ENCODE measurements at regions of chr1 and their contacts with region 1.

Region 1: DNA sequence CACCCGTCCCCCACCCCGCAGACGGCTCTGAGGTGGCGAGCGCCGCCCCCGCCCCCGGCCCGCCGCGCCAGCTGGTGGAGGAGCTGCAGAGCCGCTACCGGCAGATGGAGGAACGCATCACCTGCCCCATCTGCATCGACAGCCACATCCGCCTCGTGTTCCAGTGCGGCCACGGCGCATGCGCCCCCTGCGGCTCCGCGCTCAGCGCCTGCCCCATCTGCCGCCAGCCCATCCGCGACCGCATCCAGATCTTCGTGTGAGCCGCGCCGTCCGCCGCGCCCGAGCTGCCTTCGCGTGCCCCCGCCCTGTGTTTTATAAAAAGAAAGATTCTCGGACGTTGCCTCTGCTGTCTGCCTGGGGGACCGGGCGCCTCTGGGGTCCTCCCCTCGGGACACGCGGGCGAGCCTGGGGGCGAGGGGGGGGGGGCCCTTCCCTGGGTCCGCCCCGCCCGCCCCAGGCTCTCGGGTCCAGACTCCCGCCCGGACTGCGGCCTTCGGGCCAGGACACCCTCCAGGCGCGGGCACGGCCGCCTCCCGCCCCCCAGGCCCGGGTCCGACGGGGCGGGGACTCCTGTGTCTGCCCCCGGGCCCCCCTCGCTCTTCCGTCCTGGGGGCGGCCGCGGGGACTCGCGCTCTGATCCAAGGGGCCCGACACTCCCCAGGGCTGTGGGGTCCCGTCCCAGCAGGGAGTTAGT is 1.6 kb upstream of the MMP23B start:
- DNase-seq: peak; percentile 92 to 98 (median 97)
- H3K4me3 ChIP-seq: no peak overlapping the region
- H3K4me3 Mint-ChIP-seq: peak overlapping the region; percentile 86 to 96 (median 92)
- H3K27ac ChIP-seq: peak overlapping the region; percentile 51
- H3K27ac Mint-ChIP-seq: peak overlapping the region; percentile 91 to 99 (median 96)
- H3K4me1 ChIP-seq: peaks cover 5% of the 10 kb centered on the region
- H3K4me1 Mint-ChIP-seq: peaks cover 6 to 17% (median 8%) of the 10 kb centered on the region in 3 donors
- H3K27me3 ChIP-seq: no peaks in the 10 kb centered on the region
- H3K27me3 Mint-ChIP-seq: peaks cover 0 to 2% of the 10 kb centered on the region in 2 donors

Region 2: GRCh38 chr1:1602968-1603506 is 27.4 kb before region 1 on chr1:
- CTCF ChIA-PET with region 1: no interaction called
- POLR2A ChIA-PET with region 1: no interaction called
- DNase-seq: no peak
- H3K4me3 ChIP-seq: no peak overlapping the region
- H3K4me3 Mint-ChIP-seq: peak overlapping the region in 1 of 7 donors; percentile 57
- H3K27ac ChIP-seq: no peak overlapping the region
- H3K27ac Mint-ChIP-seq: peak overlapping the region in 2 of 8 donors; percentile 31 to 54
- H3K4me1 ChIP-seq: peaks cover 17% of the 10 kb centered on the region
- H3K4me1 Mint-ChIP-seq: peaks cover 3 to 18% (median 8%) of the 10 kb centered on the region in 3 donors
- H3K27me3 ChIP-seq: no peaks in the 10 kb centered on the region
- H3K27me3 Mint-ChIP-seq: peaks cover 0 to 5% of the 10 kb centered on the region in 2 donors

Region 3: GRCh38 chr1:1615256-1616044 is 15.0 kb before region 1 on chr1 and contains the start of gene MIB2:
- CTCF ChIA-PET with region 1: interaction called, 29 read pairs
- POLR2A ChIA-PET with region 1: interaction called, 101 read pairs
- DNase-seq: peak; percentile 98 to 99 (median 99)
- H3K4me3 ChIP-seq: peak within 1 kb of the TSS; percentile 95
- H3K4me3 Mint-ChIP-seq: peak within 1 kb of the TSS; percentile 91 to 98 (median 93)
- H3K27ac ChIP-seq: peak within 1 kb of the TSS; percentile 99
- H3K27ac Mint-ChIP-seq: peak within 1 kb of the TSS; percentile 97 to 100 (median 98)
- H3K4me1 ChIP-seq: peaks cover 30% of the 10 kb centered on the region
- H3K4me1 Mint-ChIP-seq: peaks cover 21 to 37% (median 22%) of the 10 kb centered on the region in 3 donors
- H3K27me3 ChIP-seq: no peaks in the 10 kb centered on the region
- H3K27me3 Mint-ChIP-seq: no peaks in the 10 kb centered on the region
- total RNA-seq, gene MIB2: 45.7 to 46.6 TPM

Region 4: DNA sequence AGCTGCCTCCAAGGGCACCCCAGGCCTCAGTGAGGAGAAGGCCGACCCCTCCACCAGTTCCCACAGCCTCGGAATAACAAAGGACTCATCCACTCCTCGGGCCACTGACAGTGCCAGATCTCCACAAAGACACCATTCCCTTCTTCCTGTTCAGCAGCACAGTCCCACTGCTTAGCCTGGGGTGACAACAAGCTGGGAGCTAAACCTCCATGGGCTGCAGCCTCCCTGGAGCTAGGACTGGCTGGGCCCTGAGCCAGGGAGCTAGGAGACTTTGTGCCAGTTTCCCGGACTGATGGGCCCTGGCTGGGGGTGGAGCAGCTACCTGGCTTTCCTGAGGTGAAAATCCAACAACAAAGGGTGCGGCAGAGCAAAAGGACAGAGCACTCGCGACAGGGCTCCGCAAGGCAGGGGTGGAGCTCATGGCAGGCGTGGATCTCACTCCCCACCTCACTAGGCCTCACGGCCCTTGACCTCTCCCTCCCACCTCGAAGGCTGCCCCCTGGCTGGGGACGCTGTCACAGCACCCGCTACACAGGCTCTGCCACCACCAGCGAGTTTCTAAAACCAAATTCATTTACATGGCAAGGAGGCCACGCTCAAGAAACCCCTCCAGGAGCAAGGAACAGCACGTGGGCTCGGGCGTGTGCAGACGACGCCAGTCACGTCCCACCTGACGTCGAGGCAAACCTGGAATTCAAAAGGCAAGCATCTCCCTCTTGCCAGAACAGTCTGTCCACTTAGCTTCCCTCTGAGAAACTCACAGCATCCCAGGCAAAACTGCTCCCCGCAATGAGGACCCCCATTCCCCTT is 48.4 kb after region 1 on chr1:
- CTCF ChIA-PET with region 1: interaction called, 8 read pairs
- POLR2A ChIA-PET with region 1: interaction called, 19 read pairs
- DNase-seq: peak in 4 of 5 donors; percentile 21 to 51 (median 38)
- H3K4me3 ChIP-seq: peak overlapping the region; percentile 49
- H3K4me3 Mint-ChIP-seq: peak overlapping the region; percentile 78 to 91 (median 86)
- H3K27ac ChIP-seq: no peak overlapping the region
- H3K27ac Mint-ChIP-seq: peak overlapping the region; percentile 90 to 99 (median 96)
- H3K4me1 ChIP-seq: peaks cover 15% of the 10 kb centered on the region
- H3K4me1 Mint-ChIP-seq: peaks cover 31 to 42% (median 37%) of the 10 kb centered on the region in 3 donors
- H3K27me3 ChIP-seq: no peaks in the 10 kb centered on the region
- H3K27me3 Mint-ChIP-seq: peaks cover 0 to 2% of the 10 kb centered on the region in 2 donors